Adrenal gland (tissue), 19 donors: ENCODE measurements at regions of chr4 and their contacts with region 1.

Region 1: GRCh38 chr4:1351854-1352633 is 5.0 kb downstream of the UVSSA start:
- DNase-seq: peak; percentile 78 to 93 (median 87)
- H3K4me3 ChIP-seq: no peak overlapping the region
- H3K27ac ChIP-seq: no peak overlapping the region
- H3K4me1 ChIP-seq: peaks cover 7 to 11% of the 10 kb centered on the region in 2 donors
- H3K27me3 ChIP-seq: no peaks in the 10 kb centered on the region
- CTCF ChIP-seq: peak; percentile 86 to 96 (median 90)
- POLR2A ChIP-seq: no peak

Region 2: GRCh38 chr4:1130316-1131186 is 221.5 kb before region 1 on chr4:
- intact Hi-C with region 1: loop called (anchors 10 kb)
- DNase-seq: peak; percentile 61 to 85 (median 69)
- H3K4me3 ChIP-seq: no peak overlapping the region
- H3K27ac ChIP-seq: no peak overlapping the region
- H3K4me1 ChIP-seq: peaks cover 0 to 3% of the 10 kb centered on the region in 2 donors
- H3K27me3 ChIP-seq: no peaks in the 10 kb centered on the region
- CTCF ChIP-seq: peak; percentile 96 to 99 (median 98)
- POLR2A ChIP-seq: no peak

Region 3: DNA sequence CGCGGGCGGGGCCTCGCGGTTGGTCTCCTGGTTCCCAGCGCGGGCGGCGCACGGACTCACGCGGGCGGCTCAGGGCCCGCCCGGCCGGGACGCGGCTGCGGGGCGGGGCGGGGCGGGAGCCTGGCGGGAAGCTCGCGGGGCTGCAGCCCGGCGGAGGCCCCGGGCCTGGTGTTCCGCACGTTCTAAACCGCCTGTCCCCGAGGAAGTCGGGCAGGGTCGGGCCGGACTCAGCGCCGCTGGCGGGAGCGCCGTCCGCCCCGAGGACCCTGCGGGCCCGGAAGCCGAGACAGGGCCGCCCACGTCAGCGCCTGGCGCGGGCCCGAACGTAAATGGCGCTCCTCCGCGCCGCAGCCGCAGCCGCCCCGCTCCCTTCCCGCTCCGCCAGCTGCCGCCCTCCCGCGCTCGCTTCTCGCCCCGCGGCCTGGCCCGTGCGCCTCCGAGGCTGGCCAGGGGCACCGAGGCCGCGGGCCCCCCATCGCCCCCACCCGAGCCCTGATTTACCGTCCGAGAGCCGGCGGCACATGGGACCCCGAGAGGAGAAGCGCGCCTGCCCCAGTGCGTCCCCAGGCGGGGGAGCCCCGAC is 102.8 kb before region 1 on chr4:
- intact Hi-C with region 1: loop called in 1 of 2 experiments (anchors 5 kb)
- DNase-seq: peak; percentile 82 to 89 (median 86)
- H3K4me3 ChIP-seq: peak overlapping the region; percentile 19 to 83 (median 59)
- H3K27ac ChIP-seq: peak overlapping the region; percentile 84 to 99 (median 94)
- H3K4me1 ChIP-seq: peaks cover 26 to 40% of the 10 kb centered on the region in 2 donors
- H3K27me3 ChIP-seq: no peaks in the 10 kb centered on the region
- CTCF ChIP-seq: no peak
- POLR2A ChIP-seq: peak; percentile 33 to 61

Region 4: DNA sequence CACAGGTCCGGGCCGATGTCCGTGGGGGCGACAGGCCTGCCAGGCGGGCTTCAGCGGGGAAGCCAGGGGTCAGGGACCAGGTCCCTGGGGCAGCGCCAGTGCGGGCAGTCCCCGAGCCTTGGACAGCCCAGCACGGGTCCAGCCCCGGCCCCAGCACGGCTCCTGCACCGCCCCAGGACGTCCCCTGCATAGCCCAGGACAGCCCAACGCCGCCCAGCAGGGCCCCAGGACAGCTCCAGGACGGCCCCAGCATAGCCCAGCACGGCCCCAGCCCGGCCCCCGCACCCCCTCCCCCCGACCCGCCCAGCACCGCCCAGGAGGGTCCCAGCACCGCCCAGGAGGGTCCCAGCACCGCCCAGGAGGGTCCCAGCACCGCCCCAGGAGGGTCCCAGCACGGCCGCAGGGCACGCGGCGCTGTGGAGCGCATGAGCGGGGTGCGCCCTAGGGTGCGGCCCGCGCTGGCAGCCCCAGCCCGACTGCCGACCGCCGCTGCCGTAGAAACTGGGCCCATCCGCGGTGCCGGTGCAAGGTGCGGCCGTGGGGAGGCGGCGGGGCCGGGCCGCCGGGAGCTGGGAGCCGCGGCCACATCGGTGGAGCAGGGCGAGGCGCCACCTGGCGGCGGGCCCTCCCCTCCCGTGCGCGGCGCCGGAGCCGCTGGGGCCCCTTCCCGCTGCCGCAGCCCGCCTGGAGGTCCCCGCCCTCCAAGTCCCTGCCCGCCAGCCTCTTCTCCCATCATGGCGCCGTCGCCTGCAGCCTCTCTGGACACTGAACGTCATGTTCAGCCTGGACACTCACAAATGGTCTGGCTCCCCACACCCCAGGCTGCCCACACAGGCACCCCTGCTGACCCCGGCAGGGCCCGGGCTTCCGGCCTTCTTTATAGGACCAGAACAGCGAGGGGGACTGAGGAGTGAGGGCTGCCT is 161.0 kb after region 1 on chr4:
- intact Hi-C with region 1: loop called (anchors 2 to 5 kb)
- DNase-seq: peak in 5 of 7 donors; percentile 37 to 55 (median 40)
- H3K4me3 ChIP-seq: peak overlapping the region in 1 of 4 donors; percentile 29
- H3K27ac ChIP-seq: no peak overlapping the region
- H3K4me1 ChIP-seq: no peaks in the 10 kb centered on the region
- H3K27me3 ChIP-seq: peaks cover 33% of the 10 kb centered on the region
- CTCF ChIP-seq: peak in 5 of 6 experiments; percentile 17 to 82 (median 75)
- POLR2A ChIP-seq: no peak

Region 5: DNA sequence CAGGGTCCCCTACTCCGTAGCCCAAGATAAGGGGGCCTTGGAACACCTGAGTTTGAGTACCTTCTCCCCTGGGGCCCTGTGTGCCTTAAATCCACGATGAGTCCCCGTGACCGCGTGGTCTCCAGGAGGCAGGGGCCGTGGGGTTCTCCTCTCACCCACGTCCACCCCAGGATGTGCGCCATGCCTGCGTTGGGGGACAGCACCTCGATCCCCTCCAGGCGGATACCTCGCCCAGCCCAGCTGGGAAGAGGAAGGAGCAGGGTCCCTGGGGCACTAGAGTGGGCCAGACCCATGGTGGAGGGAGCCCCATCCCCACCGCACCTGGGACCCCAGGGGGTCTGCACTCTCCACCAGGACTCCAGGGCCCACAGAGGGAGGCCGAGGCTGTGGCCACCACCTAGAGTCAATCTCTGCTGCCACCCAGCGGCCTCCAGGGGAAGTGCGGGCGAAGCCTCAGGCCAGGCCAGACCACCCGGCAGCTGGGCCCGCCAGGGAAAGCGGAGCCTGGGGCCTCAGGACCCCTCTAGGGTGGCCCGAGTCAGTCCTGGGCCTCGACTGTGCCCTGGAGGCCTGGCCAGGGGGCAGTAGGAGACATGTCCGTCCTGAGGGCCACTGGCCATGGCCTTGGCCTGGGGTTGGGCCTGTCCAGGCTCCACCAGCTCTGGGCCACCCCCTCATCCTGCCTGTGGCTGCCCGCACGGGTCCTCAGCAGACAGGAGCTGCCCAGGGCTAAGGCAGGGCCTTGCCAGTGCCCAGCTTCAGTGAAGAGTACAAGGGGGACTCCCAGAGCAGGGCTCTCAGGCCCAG is 277.1 kb after region 1 on chr4:
- intact Hi-C with region 1: loop called (anchors 2 to 5 kb)
- DNase-seq: peak; percentile 37 to 78 (median 65)
- H3K4me3 ChIP-seq: no peak overlapping the region
- H3K27ac ChIP-seq: no peak overlapping the region
- H3K4me1 ChIP-seq: peaks cover 0 to 3% of the 10 kb centered on the region in 2 donors
- H3K27me3 ChIP-seq: no peaks in the 10 kb centered on the region
- CTCF ChIP-seq: peak; percentile 81 to 99 (median 91)
- POLR2A ChIP-seq: no peak